H1 (cell line): ENCODE measurements at regions of chr6 and their contacts with region 1.

Region 1: DNA sequence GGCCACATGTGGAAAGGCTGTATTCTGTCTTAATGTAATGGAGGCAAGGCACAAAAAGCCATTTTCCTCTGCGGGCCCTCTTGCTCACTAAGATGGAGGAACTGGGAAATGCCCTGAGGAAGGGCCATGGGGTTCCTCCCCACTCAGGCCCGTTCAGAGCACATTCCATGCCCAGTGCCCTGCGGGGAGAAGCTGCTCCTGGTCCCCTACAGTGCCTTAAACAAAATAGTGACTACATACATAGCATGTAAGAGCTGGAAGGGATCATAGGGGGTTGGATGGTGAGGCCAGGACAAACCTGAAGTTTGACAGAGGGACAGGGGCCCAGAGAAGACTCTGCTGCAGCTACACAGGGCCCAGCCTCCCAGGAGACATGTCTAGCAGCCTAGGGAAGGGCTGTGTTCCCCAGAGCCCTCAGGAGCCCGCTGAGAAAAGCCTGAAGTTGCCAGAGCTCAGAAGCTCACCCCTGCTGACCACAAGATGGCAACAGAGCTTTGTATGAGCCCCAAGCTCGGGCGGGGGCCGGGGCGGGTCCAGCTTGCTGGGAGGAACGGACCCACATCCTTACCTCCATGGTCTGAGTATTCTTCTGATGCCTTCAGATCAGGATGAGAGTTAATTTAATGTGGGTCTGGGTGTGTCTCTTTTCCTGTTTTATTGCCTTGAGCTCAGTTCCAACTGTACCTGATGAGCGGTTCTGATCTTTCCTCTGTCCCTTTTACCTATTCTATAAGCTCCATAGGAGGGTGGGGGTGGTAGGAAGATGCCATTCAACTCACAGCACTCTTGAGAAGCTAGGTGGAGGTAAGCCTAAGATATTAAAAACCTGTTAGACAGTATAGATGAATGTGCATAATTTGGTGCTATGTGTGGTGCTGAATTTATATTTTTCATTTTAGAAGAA is 242.9 kb downstream of the CDC5L start:
- DNase-seq: peak in 1 of 2 experiments; percentile 77
- H3K4me3 ChIP-seq: no peak overlapping the region
- H3K27ac ChIP-seq: no peak overlapping the region
- H3K4me1 ChIP-seq: peaks cover 8 to 19% (median 13%) of the 10 kb centered on the region in 4 experiments
- H3K27me3 ChIP-seq: peaks cover 0 to 4% (median 0%) of the 10 kb centered on the region in 4 experiments; a peak in 2 of 7 replicates
- CTCF ChIP-seq: peak; percentile 67 to 87 (median 80)
- EP300 ChIP-seq: no peak
- POLR2A ChIP-seq: no peak
- RAD21 ChIP-seq: peak; percentile 94 to 98

Region 2: GRCh38 chr6:44593539-44593944 is 36.8 kb before region 1 on chr6:
- CTCF ChIA-PET with region 1: interaction called, 41 read pairs
- POLR2A ChIA-PET with region 1: interaction called, 5 read pairs
- DNase-seq: peak; percentile 56 to 82
- H3K4me3 ChIP-seq: no peak overlapping the region
- H3K27ac ChIP-seq: no peak overlapping the region
- H3K4me1 ChIP-seq: peaks cover 0 to 3% (median 0%) of the 10 kb centered on the region in 4 experiments; a peak in 2 of 7 replicates
- H3K27me3 ChIP-seq: no peaks in the 10 kb centered on the region
- CTCF ChIP-seq: peak in 2 of 3 experiments; percentile 68 to 69; a peak in 3 of 4 replicates
- EP300 ChIP-seq: peak in 1 of 2 experiments; percentile 21; a peak in 1 of 3 replicates
- POLR2A ChIP-seq: no peak
- RAD21 ChIP-seq: peak; percentile 69 to 81

Region 3: DNA sequence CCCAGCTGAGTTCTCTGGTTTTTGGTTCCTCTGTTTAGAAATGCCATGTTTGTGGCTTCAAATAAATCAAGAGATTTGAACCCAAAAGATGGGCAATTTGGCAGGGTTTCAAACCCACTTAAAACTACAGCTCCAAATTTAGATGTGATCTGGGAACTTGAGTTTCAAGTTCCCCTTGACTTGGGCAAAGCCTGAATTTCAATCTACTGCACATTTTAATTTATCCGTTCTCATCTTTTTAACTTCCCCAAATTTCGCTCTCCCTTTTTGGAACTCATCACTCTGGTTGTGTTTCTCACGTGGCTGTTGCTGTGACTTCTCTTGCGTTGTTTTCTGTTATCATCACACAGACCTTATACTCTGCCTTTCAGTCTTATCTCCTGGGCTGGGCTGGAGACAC is 12.0 kb before region 1 on chr6:
- CTCF ChIA-PET with region 1: interaction called, 11 read pairs
- POLR2A ChIA-PET with region 1: interaction called, 3 read pairs
- DNase-seq: no peak
- H3K4me3 ChIP-seq: no peak overlapping the region
- H3K27ac ChIP-seq: no peak overlapping the region
- H3K4me1 ChIP-seq: peaks cover 0 to 10% (median 5%) of the 10 kb centered on the region in 4 experiments; a peak in 3 of 7 replicates
- H3K27me3 ChIP-seq: 0 out of 7 replicates have a peak, but pooled peaks cover 0 to 2% (median 0%) of the 10 kb centered on the region in 4 experiments
- CTCF ChIP-seq: no peak
- EP300 ChIP-seq: no peak
- POLR2A ChIP-seq: no peak
- RAD21 ChIP-seq: no peak

Region 4: DNA sequence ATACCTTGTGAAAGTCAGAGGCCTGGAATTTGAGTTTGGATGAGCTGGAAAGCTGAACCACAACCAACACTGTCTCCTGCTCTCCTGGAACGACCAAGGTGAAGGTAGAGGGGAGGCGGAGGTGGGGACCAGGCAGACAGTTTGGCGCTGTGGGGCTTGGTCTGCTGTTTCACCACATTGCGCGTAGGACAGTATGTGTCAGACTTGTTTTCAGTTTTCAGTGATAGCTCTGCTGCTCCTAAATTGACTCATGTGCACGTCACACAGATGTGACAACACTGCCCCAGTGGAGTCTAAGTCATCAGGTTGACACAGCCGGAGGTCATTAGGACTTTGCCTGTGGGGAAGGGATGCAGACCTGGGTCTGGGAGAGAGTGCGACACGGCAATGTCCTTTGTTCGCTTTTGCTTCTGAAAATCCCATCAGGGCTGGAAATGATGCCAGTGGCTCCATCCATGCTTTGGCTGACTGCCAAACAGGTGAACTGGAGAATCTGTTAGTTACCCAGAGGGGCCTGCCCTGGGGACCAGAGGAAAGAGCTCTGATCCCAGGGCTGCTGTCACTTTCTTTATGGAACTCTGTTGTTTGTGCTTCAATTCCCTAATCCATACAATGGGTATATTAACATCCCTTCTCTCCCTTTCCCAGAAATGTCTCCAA is 12.6 kb after region 1 on chr6:
- CTCF ChIA-PET with region 1: interaction called, 39 read pairs
- POLR2A ChIA-PET with region 1: no interaction called
- DNase-seq: no peak
- H3K4me3 ChIP-seq: no peak overlapping the region
- H3K27ac ChIP-seq: no peak overlapping the region
- H3K4me1 ChIP-seq: no peaks in the 10 kb centered on the region
- H3K27me3 ChIP-seq: no peaks in the 10 kb centered on the region
- CTCF ChIP-seq: no peak
- EP300 ChIP-seq: no peak
- POLR2A ChIP-seq: no peak
- RAD21 ChIP-seq: no peak

Region 5: GRCh38 chr6:44667668-44668390 is 37.5 kb after region 1 on chr6:
- CTCF ChIA-PET with region 1: interaction called, 17 read pairs
- POLR2A ChIA-PET with region 1: no interaction called
- DNase-seq: peak in 1 of 2 experiments; percentile 75
- H3K4me3 ChIP-seq: no peak overlapping the region
- H3K27ac ChIP-seq: no peak overlapping the region
- H3K4me1 ChIP-seq: peaks cover 6 to 39% (median 27%) of the 10 kb centered on the region in 4 experiments
- H3K27me3 ChIP-seq: no peaks in the 10 kb centered on the region; a peak in 1 of 7 replicates
- CTCF ChIP-seq: peak; percentile 55 to 81 (median 78)
- EP300 ChIP-seq: no peak
- POLR2A ChIP-seq: no peak
- RAD21 ChIP-seq: peak; percentile 49 to 67

Region 6: DNA sequence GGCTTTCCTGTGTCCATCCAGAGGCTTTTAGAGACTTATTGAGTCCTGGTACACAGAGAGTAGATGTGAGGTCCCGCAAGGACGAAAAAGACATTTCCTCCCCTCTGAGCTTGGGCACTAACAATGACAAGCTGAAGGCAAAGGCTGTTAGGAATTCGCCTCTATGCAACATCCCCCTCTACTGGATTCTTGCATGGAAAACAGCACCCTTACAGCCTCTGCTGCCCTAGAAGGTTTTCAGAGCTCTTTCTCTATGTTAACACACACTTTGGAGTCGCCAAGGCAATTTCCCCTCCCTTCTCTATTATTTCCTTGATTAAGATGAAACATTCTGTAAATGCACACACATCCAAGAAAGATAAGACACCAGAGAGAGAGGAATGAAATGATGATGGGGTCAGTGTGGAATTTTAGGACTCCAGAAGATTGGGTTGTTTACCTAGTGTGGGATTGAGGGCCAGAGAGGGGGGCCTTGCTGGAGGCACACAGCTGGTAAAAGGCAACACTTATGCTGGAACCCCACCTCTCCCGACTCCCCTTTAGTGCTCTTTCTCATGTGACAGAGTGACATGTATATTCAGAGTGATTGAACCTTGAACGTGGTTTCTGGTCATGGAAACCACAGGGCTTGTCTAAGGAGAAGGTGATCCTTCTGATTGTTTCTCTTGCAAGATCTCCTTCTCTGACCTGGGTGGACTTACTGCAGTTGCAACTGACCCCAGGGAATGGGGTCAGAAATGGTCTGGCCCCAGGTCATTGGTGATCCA is 1084.5 kb after region 1 on chr6:
- CTCF ChIA-PET with region 1: interaction called, 12 read pairs
- POLR2A ChIA-PET with region 1: no interaction called
- DNase-seq: peak; percentile 49 to 75
- H3K4me3 ChIP-seq: no peak overlapping the region
- H3K27ac ChIP-seq: no peak overlapping the region
- H3K4me1 ChIP-seq: 0 out of 7 replicates have a peak, but pooled peaks cover 0 to 2% (median 0%) of the 10 kb centered on the region in 4 experiments
- H3K27me3 ChIP-seq: peaks cover 0 to 2% (median 0%) of the 10 kb centered on the region in 4 experiments; a peak in 1 of 7 replicates
- CTCF ChIP-seq: peak; percentile 3 to 86 (median 76)
- EP300 ChIP-seq: no peak
- POLR2A ChIP-seq: no peak
- RAD21 ChIP-seq: peak; percentile 98